Psoas muscle (tissue), 8 donors: ENCODE measurements at regions of chr5 and their contacts with region 1.

Region 1: DNA sequence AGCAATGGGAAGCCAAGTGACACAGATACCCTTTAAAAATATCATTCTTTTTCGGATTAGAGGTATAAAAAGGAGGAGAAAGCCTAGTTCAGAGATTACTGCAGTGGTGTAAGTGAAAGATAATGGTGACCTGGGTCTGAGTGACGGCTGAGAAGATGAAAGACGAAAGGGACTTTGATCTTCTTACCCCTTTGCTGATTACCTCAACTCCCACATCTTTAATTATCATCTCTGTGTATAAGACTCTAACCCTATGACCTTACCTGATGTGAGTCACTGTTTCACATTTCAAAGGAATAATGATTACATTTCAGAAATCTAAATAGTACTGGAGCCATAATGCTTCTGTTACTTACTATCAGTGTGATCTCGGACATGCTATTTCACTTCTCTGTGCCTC is 21.4 kb upstream of the CCNO start:
- DNase-seq: no peak
- ATAC-seq: no peak
- H3K4me3 ChIP-seq: no peak overlapping the region
- H3K27ac ChIP-seq: no peak overlapping the region
- H3K4me1 ChIP-seq: no peaks in the 10 kb centered on the region
- H3K27me3 ChIP-seq: no peaks in the 10 kb centered on the region
- CTCF ChIP-seq: no peak

Region 2: GRCh38 chr5:55294935-55295334 is 40.1 kb after region 1 on chr5:
- intact Hi-C with region 1: loop called (anchors 5 kb)
- DNase-seq: no peak
- ATAC-seq: no peak
- H3K4me3 ChIP-seq: no peak overlapping the region
- H3K27ac ChIP-seq: no peak overlapping the region
- H3K4me1 ChIP-seq: no peaks in the 10 kb centered on the region
- H3K27me3 ChIP-seq: no peaks in the 10 kb centered on the region
- CTCF ChIP-seq: no peak

Region 3: DNA sequence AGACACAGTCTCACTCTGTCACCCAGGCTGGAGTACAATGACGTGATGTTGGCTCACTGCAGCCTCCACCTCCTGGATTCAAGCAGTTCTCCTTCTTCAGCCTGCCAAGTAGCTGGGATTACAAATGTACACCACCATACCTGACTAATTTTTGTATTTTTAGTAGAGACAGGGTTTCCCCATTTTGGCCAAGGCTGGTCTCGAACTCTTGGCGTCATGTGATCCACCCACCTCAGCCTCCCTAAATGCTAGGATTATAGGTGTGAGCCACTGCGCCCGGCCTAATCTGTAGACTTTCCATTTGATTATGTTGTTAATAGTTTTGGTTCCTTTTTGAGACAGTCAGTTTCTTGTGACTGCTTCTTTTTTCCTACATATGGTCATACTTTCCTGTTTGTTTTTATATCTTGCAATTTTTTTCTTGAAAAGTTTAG is 84.0 kb after region 1 on chr5:
- intact Hi-C with region 1: no loop called
- DNase-seq: no peak
- ATAC-seq: peak in 2 of 4 donors; percentile 70 to 84
- H3K4me3 ChIP-seq: no peak overlapping the region
- H3K27ac ChIP-seq: no peak overlapping the region
- H3K4me1 ChIP-seq: no peaks in the 10 kb centered on the region
- H3K27me3 ChIP-seq: no peaks in the 10 kb centered on the region
- CTCF ChIP-seq: no peak

Region 4: GRCh38 chr5:55370291-55370925 is 115.6 kb after region 1 on chr5:
- intact Hi-C with region 1: no loop called
- DNase-seq: no peak
- ATAC-seq: no peak
- H3K4me3 ChIP-seq: no peak overlapping the region
- H3K27ac ChIP-seq: no peak overlapping the region
- H3K4me1 ChIP-seq: no peaks in the 10 kb centered on the region
- H3K27me3 ChIP-seq: no peaks in the 10 kb centered on the region
- CTCF ChIP-seq: no peak

Region 5: DNA sequence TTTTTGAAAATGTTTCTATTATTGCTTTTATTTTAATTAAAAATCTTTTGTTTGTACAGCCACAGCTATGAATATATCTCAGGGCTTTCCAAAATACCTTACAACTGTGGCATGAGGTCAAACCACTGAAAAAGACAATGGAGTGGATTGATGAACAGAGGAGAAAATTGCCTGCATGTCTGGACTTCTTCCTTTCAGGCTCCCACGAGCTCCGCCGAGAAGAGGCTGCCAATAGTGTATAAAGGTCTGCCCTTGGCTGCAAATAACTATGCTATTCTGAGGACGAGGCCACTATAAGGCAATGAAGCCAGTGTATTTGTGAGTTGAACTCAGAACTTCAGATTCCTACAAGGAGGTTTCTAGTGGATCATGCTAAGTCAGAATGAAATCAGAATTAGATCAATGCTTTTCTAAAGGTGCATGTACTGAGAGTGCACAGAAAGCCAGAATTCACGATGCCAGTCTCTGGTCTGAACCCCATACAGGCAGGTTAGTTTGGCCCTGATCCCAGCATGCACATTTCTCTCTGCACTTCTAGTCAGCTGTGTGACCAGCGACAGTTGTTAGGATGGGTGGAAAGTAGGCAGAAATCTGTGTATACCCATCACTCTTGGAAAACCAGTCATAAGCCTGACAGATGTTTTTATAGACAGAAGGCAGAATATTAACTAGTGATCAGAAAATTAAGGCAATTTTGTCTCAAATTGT is 322.7 kb after region 1 on chr5:
- intact Hi-C with region 1: no loop called
- DNase-seq: peak; percentile 27 to 64
- ATAC-seq: peak; percentile 83 to 92 (median 89)
- H3K4me3 ChIP-seq: no peak overlapping the region
- H3K27ac ChIP-seq: peak overlapping the region; percentile 50
- H3K4me1 ChIP-seq: peaks cover 29% of the 10 kb centered on the region
- H3K27me3 ChIP-seq: no peaks in the 10 kb centered on the region
- CTCF ChIP-seq: no peak

Region 6: GRCh38 chr5:56190497-56190896 is 935.7 kb after region 1 on chr5:
- intact Hi-C with region 1: loop called in 1 of 2 experiments (anchors 10 kb)
- DNase-seq: peak in 1 of 2 donors; percentile 21
- ATAC-seq: no peak
- H3K4me3 ChIP-seq: no peak overlapping the region
- H3K27ac ChIP-seq: no peak overlapping the region
- H3K4me1 ChIP-seq: no peaks in the 10 kb centered on the region
- H3K27me3 ChIP-seq: no peaks in the 10 kb centered on the region
- CTCF ChIP-seq: no peak